Prostate gland (tissue), 2 donors: ENCODE measurements at regions of chr9 and their contacts with region 1.

Region 1: DNA sequence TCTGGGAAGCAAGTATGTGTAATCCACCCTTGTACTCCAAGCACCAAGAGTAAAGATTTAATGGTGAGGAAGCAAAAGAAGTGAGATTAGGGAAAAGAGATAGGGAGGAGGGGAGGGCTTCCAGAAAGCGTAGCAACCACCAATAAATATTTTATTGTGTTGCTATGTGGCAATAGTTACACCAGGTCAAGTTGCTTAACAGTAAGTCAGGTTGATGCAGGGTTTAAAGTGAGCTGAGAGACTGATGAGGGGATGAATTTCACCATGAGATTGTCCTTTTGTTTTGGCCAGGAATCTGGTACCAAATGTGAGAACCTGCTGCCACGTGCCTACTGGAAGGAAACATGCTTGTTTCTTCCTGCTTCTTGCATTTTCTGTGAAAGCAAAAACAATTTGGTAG is 62.7 kb downstream of the PCSK5 start:
- DNase-seq: no peak
- H3K4me3 ChIP-seq: no peak overlapping the region
- H3K27ac ChIP-seq: no peak overlapping the region
- H3K4me1 ChIP-seq: no peaks in the 10 kb centered on the region
- H3K27me3 ChIP-seq: no peaks in the 10 kb centered on the region
- CTCF ChIP-seq: no peak
- POLR2A ChIP-seq: no peak

Region 2: GRCh38 chr9:76023715-76024195 is 70.5 kb after region 1 on chr9:
- intact Hi-C with region 1: loop called (anchors 10 kb)
- DNase-seq: no peak
- H3K4me3 ChIP-seq: no peak overlapping the region
- H3K27ac ChIP-seq: no peak overlapping the region
- H3K4me1 ChIP-seq: no peaks in the 10 kb centered on the region
- H3K27me3 ChIP-seq: no peaks in the 10 kb centered on the region
- CTCF ChIP-seq: no peak
- POLR2A ChIP-seq: no peak

Region 3: GRCh38 chr9:76333319-76333880 is 380.2 kb after region 1 on chr9:
- intact Hi-C with region 1: no loop called
- DNase-seq: no peak
- H3K4me3 ChIP-seq: no peak overlapping the region
- H3K27ac ChIP-seq: no peak overlapping the region
- H3K4me1 ChIP-seq: no peaks in the 10 kb centered on the region
- H3K27me3 ChIP-seq: no peaks in the 10 kb centered on the region
- CTCF ChIP-seq: no peak
- POLR2A ChIP-seq: no peak